Activated CD4-positive, alpha-beta T cell treated with anti-CD3 and anti-CD28 coated beads for 36 hours (primary cell): ENCODE measurements at regions of chr1 and their contacts with region 1.

Region 1: DNA sequence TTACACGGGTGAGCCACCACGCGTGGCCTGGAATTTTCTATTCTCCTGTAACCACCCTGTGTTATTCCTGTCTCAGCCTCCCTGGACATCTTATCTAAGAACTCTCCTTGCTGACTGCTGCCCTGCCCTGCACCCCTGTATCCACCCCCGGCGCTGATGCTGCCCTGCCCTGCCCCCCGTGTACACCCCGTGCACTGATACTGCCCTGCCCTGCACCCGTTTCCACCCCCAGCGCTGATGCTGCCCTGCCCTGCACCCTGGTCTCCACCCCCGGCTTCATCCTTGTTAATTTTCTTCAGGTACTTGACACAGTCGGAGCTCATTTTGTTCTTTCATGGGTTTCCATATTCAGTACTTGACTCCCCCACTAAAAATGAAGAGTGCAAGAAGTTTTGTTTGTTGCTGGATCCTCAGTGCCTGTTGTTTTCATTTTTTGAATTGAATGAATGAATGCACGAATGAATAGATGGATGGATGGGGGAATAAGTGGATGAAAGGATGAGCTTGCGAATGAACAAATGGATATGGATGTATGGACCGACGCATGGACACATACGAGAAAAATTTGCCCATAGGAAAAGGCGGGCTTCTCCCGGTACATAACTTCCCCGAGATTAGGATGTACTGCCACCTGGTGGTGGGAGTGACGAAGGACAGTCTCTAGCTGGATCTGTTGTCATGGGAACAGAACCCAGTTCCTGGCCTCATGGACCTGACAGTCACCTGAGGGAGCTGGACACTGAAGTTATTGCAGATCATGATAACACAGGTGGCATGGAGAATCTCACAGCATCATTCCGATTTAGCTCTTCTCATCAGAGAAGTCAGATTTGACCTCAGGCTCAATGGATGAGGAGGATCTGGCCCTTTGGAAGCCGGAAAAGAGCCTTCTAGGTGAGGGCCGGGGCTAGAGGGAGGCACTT is 14.9 kb downstream of the AADACL4 start:
- DNase-seq: peak; percentile 82
- ATAC-seq: peak; percentile 74
- H3K4me3 Mint-ChIP-seq: no peak overlapping the region
- H3K27ac Mint-ChIP-seq: no peak overlapping the region
- H3K4me1 Mint-ChIP-seq: peaks cover 4% of the 10 kb centered on the region
- H3K27me3 Mint-ChIP-seq: no peaks in the 10 kb centered on the region

Region 2: DNA sequence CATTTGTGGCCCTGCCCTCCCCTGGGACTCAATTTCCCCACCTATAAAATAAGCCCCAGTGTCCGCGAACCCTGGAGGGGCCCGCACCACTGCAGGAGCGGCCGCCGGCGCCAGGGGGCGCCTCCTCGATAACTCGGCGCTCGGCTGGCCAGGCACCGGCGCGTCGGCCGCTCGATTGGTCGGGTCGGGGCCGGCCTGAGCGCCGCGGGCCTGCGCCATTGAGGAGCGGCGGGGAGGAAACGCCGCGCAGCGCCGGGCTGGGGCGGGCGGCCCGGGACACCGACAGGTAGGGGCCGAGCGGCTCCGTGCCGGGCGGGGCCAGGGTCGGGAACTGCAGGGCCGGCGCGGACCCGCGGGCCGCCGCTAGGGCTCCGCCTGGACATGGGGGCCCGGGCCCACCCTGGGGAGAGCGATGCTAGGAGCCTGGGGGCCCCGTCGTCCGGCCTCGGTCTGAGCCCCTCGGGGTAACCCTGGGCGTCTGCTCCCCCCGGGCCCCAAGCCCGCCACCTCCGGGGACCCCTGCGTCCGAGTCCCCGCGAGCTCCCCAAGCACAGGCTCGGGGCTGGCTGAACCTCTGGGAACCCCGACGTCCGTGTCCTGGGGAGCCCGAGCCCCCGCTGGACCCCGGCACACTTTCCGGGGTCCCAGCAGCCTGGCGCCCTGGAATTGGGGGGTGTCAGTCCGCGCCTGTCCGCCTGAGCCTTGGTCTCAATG is 428.8 kb before region 1 on chr1 and contains the start of gene VPS13D:
- CTCF ChIA-PET with region 1: interaction called, 3 read pairs
- POLR2A ChIA-PET with region 1: no interaction called
- intact Hi-C with region 1: loop called in 1 of 2 experiments (anchors 1 kb)
- DNase-seq: peak; percentile 93
- ATAC-seq: peak; percentile 92
- H3K4me3 Mint-ChIP-seq: peak within 1 kb of the TSS; percentile 83
- H3K27ac Mint-ChIP-seq: peak within 1 kb of the TSS; percentile 47
- H3K4me1 Mint-ChIP-seq: peaks cover 23% of the 10 kb centered on the region
- H3K27me3 Mint-ChIP-seq: no peaks in the 10 kb centered on the region
- total RNA-seq, gene VPS13D: 20.6 to 22.9 TPM

Region 3: DNA sequence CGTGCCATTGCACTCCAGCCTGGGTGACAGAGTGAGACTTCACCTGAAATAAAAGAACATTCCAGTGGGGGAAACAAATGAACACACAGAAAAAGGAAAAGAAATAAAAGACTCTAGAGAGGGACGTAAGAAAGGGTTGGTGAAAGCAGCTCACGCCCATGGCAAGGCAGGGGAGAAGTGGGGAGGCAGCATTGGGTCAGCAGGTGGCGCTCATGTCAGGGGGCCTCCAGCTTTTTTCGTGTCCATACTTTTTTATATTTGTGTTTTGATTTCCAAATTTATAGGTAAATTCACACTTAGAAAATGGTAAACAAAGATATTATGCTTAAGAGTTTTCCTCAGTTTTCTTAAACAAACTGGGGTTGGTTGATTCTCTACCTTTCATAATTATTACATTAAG is 383.4 kb before region 1 on chr1:
- CTCF ChIA-PET with region 1: interaction called, 13 read pairs
- POLR2A ChIA-PET with region 1: no interaction called
- intact Hi-C with region 1: loop called (anchors 1 kb)
- DNase-seq: peak; percentile 74
- ATAC-seq: no peak
- H3K4me3 Mint-ChIP-seq: no peak overlapping the region
- H3K27ac Mint-ChIP-seq: no peak overlapping the region
- H3K4me1 Mint-ChIP-seq: no peaks in the 10 kb centered on the region
- H3K27me3 Mint-ChIP-seq: no peaks in the 10 kb centered on the region

Region 4: DNA sequence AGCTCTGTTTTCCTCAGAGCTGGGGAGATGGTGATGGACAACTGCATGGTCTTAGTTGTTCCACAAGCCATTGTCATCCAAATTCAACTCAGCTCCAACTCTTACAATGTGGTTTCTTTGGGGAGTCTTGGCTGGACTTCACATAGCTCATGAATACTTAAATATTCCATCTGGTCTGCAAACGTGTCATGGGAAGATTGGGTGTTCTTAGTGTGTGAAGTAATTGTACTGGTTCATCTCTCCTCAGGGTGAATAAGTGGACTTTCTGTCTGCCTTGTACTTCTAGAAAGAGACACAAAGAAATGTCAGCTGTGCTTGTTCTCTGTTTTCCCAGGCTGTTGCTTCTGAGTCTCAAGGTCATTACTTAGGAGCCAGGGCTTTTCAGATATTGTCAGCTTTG is 322.4 kb before region 1 on chr1:
- CTCF ChIA-PET with region 1: interaction called, 10 read pairs
- POLR2A ChIA-PET with region 1: no interaction called
- intact Hi-C with region 1: no loop called
- DNase-seq: no peak
- ATAC-seq: no peak
- H3K4me3 Mint-ChIP-seq: no peak overlapping the region
- H3K27ac Mint-ChIP-seq: no peak overlapping the region
- H3K4me1 Mint-ChIP-seq: peaks cover 13% of the 10 kb centered on the region
- H3K27me3 Mint-ChIP-seq: no peaks in the 10 kb centered on the region

Region 5: GRCh38 chr1:12518931-12519692 is 139.7 kb before region 1 on chr1:
- CTCF ChIA-PET with region 1: no interaction called
- POLR2A ChIA-PET with region 1: no interaction called
- intact Hi-C with region 1: no loop called
- DNase-seq: peak; percentile 82
- ATAC-seq: peak; percentile 98
- H3K4me3 Mint-ChIP-seq: no peak overlapping the region
- H3K27ac Mint-ChIP-seq: peak overlapping the region; percentile 59
- H3K4me1 Mint-ChIP-seq: peaks cover 34% of the 10 kb centered on the region
- H3K27me3 Mint-ChIP-seq: no peaks in the 10 kb centered on the region